CD8-positive, alpha-beta T cell (primary cell): ENCODE measurements at regions of chr21 and their contacts with region 1.

Region 1: GRCh38 chr21:42187976-42188653 is 30.8 kb upstream of the ABCG1 start:
- DNase-seq: peak; percentile 58 to 95 (median 80)
- ATAC-seq: peak; percentile 85
- H3K4me3 ChIP-seq: peak overlapping the region; percentile 11 to 22
- H3K4me3 Mint-ChIP-seq: peak overlapping the region; percentile 74
- H3K27ac ChIP-seq: peak overlapping the region; percentile 63 to 85
- H3K27ac Mint-ChIP-seq: peak overlapping the region; percentile 97
- H3K4me1 ChIP-seq: peaks cover 86% of the 10 kb centered on the region
- H3K4me1 Mint-ChIP-seq: peaks cover 77% of the 10 kb centered on the region
- H3K27me3 ChIP-seq: no peaks in the 10 kb centered on the region
- H3K27me3 Mint-ChIP-seq: no peaks in the 10 kb centered on the region
- CTCF ChIP-seq: no peak

Region 2: GRCh38 chr21:42199488-42200458 is 11.7 kb after region 1 on chr21:
- CTCF ChIA-PET with region 1: interaction called, 3 read pairs
- POLR2A ChIA-PET with region 1: interaction called, 4 read pairs
- intact Hi-C with region 1: loop called (anchors 1 kb)
- DNase-seq: peak in 4 of 9 experiments; percentile 34 to 76 (median 48)
- ATAC-seq: peak; percentile 77
- H3K4me3 ChIP-seq: no peak overlapping the region
- H3K4me3 Mint-ChIP-seq: peak overlapping the region; percentile 5
- H3K27ac ChIP-seq: peak overlapping the region; percentile 15 to 40
- H3K27ac Mint-ChIP-seq: peak overlapping the region; percentile 89
- H3K4me1 ChIP-seq: peaks cover 39% of the 10 kb centered on the region
- H3K4me1 Mint-ChIP-seq: peaks cover 68% of the 10 kb centered on the region
- H3K27me3 ChIP-seq: no peaks in the 10 kb centered on the region
- H3K27me3 Mint-ChIP-seq: no peaks in the 10 kb centered on the region
- CTCF ChIP-seq: no peak